B cell (primary cell): ENCODE measurements at regions of chr9 and their contacts with region 1.

Region 1: GRCh38 chr9:6412487-6413364 is at the start of gene UHRF2:
- DNase-seq: peak; percentile 100
- ATAC-seq: peak; percentile 87
- H3K4me3 ChIP-seq: peak within 1 kb of the TSS; percentile 72 to 89 (median 87)
- H3K4me3 Mint-ChIP-seq: peak within 1 kb of the TSS; percentile 88
- H3K27ac ChIP-seq: peak within 1 kb of the TSS; percentile 95 to 97
- H3K27ac Mint-ChIP-seq: peak within 1 kb of the TSS; percentile 98
- H3K4me1 ChIP-seq: peaks cover 61 to 62% of the 10 kb centered on the region in 2 donors
- H3K4me1 Mint-ChIP-seq: peaks cover 58% of the 10 kb centered on the region
- H3K27me3 ChIP-seq: no peaks in the 10 kb centered on the region
- H3K27me3 Mint-ChIP-seq: no peaks in the 10 kb centered on the region
- CTCF ChIP-seq: no peak
- total RNA-seq, gene UHRF2: 153 and 171 TPM in 2 replicates

Region 2: DNA sequence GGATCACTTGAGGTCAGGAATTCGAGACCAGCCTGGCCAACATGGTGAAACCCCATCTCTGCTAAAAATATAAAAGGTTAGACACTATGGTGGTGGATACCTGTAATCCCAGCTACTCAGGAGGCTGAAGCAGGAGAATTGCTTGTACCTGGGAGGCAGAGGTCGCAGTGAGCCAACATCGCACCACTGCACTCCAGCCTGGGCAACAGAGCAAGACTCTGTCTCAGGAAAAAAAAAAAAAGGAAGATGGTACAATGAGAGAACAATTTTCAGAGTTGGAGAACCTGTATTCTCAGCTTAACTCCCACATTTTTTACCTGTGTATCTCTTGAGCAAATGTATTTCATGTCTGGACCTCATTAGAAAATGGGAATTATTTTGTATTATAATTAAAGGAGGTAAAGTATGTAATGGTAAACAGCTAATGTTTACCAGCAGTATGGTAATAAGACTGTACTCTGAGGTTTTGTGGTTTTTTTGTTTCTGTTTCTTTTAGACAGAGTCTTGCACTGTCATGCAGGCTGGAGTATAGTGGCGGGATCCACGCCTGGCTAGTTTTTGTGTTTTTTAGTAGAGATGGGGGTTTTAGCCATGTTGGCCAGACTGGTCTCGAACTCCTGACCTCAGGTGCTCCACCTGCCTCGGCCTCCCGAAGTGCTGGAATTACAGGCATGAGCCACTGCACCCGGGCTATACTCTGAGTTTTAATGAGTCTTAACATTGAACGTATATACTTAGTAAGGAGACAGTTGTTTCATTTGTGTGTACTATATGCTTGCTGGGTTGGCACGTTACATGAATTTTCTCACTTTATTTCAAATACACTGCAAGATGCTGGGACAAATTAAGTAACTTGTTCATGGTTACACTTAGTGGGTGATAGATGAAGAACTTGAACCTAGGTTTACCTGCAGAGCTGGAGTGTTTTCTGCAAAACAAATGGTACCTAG is 16.5 kb after region 1 on chr9:
- CTCF ChIA-PET with region 1: interaction called, 9 read pairs
- POLR2A ChIA-PET with region 1: interaction called, 29 read pairs
- intact Hi-C with region 1: loop called (anchors 1 kb)
- DNase-seq: peak; percentile 67
- ATAC-seq: peak; percentile 87
- H3K4me3 ChIP-seq: no peak overlapping the region
- H3K4me3 Mint-ChIP-seq: peak overlapping the region; percentile 67
- H3K27ac ChIP-seq: peak overlapping the region; percentile 37 to 60
- H3K27ac Mint-ChIP-seq: peak overlapping the region; percentile 87
- H3K4me1 ChIP-seq: peaks cover 51 to 59% of the 10 kb centered on the region in 2 donors
- H3K4me1 Mint-ChIP-seq: peaks cover 82% of the 10 kb centered on the region
- H3K27me3 ChIP-seq: no peaks in the 10 kb centered on the region
- H3K27me3 Mint-ChIP-seq: no peaks in the 10 kb centered on the region
- CTCF ChIP-seq: no peak

Region 3: DNA sequence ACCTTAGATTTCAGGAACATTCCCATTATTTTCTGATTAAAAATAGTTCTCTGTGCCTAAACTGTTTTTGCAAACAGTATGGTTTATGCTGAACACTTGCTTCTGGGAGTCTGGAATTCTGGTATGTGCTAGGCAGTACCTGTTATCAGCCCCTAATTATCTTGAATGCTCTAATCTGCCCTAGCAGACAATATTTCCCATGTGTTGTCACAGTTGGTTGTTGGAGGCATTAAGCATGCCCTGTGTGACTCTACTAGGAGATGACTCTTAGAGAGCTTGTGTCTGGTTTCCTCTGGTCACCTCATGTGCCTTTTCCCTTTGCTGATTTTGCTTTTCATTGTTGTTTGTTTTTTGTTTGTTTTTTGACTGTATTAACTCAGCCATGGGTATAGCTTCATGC is 36.9 kb after region 1 on chr9:
- CTCF ChIA-PET with region 1: interaction called, 5 read pairs
- POLR2A ChIA-PET with region 1: no interaction called
- intact Hi-C with region 1: loop called (anchors 5 kb)
- DNase-seq: no peak
- ATAC-seq: no peak
- H3K4me3 ChIP-seq: no peak overlapping the region
- H3K4me3 Mint-ChIP-seq: no peak overlapping the region
- H3K27ac ChIP-seq: peak overlapping the region in 1 of 2 donors; percentile 54
- H3K27ac Mint-ChIP-seq: peak overlapping the region; percentile 13
- H3K4me1 ChIP-seq: peaks cover 17 to 32% of the 10 kb centered on the region in 2 donors
- H3K4me1 Mint-ChIP-seq: peaks cover 68% of the 10 kb centered on the region
- H3K27me3 ChIP-seq: no peaks in the 10 kb centered on the region
- H3K27me3 Mint-ChIP-seq: no peaks in the 10 kb centered on the region
- CTCF ChIP-seq: no peak

Region 4: GRCh38 chr9:6557883-6558616 is 145.3 kb after region 1 on chr9:
- CTCF ChIA-PET with region 1: no interaction called
- POLR2A ChIA-PET with region 1: no interaction called
- intact Hi-C with region 1: no loop called
- DNase-seq: no peak
- ATAC-seq: no peak
- H3K4me3 ChIP-seq: no peak overlapping the region
- H3K4me3 Mint-ChIP-seq: no peak overlapping the region
- H3K27ac ChIP-seq: no peak overlapping the region
- H3K27ac Mint-ChIP-seq: no peak overlapping the region
- H3K4me1 ChIP-seq: no peaks in the 10 kb centered on the region
- H3K4me1 Mint-ChIP-seq: no peaks in the 10 kb centered on the region
- H3K27me3 ChIP-seq: no peaks in the 10 kb centered on the region
- H3K27me3 Mint-ChIP-seq: no peaks in the 10 kb centered on the region
- CTCF ChIP-seq: no peak

Region 5: GRCh38 chr9:6640268-6641072 is 227.7 kb after region 1 on chr9:
- CTCF ChIA-PET with region 1: no interaction called
- POLR2A ChIA-PET with region 1: no interaction called
- intact Hi-C with region 1: no loop called
- DNase-seq: no peak
- ATAC-seq: no peak
- H3K4me3 ChIP-seq: no peak overlapping the region
- H3K4me3 Mint-ChIP-seq: no peak overlapping the region
- H3K27ac ChIP-seq: no peak overlapping the region
- H3K27ac Mint-ChIP-seq: no peak overlapping the region
- H3K4me1 ChIP-seq: peaks cover 15 to 23% of the 10 kb centered on the region in 2 donors
- H3K4me1 Mint-ChIP-seq: peaks cover 26% of the 10 kb centered on the region
- H3K27me3 ChIP-seq: peaks cover 0 to 34% (median 23%) of the 10 kb centered on the region in 4 experiments
- H3K27me3 Mint-ChIP-seq: peaks cover 47% of the 10 kb centered on the region
- CTCF ChIP-seq: no peak